ENCODE measurements at regions of chr17 and their contacts with region 1.

Region 1: GRCh38 chr17:19369846-19370492 is 7.4 kb upstream of the B9D1 start:
- DNase-seq: peak in 2 of 6 donors; percentile 21 to 25
- ATAC-seq: no peak
- H3K4me3 ChIP-seq: no peak overlapping the region
- H3K27ac ChIP-seq: no peak overlapping the region
- H3K4me1 ChIP-seq: no peaks in the 10 kb centered on the region
- H3K27me3 ChIP-seq: no peaks in the 10 kb centered on the region
- CTCF ChIP-seq: no peak

Region 2: DNA sequence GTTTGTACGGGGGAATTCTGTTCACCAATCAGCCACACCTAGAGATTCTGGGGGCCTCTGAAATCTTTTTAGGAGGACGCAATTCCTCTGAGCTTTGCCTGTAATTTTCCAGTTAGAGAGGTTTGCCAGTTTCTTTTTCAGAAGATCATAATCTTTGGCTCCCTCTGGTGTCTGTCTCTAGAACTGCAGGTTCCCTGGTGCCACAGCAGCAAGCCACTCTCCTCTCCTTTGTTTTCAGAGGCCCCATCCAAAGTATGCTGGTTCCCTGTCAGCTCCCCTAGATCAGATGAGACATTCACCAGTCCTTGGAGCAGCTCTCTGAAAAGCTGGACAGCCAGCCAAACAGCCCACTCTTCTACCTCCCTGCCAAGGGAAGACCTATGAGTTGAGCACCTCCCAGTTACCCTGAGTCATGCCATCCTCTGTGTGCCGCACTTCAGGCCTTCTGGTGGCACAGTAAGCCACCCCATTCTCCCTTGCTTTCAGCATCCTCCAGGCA is 77.2 kb after region 1 on chr17:
- intact Hi-C with region 1: loop called in 2 of 3 experiments (anchors 5 to 10 kb)
- DNase-seq: peak in 4 of 6 donors; percentile 34 to 79 (median 54)
- ATAC-seq: peak; percentile 61 to 93 (median 88)
- H3K4me3 ChIP-seq: no peak overlapping the region
- H3K27ac ChIP-seq: no peak overlapping the region
- H3K4me1 ChIP-seq: peaks cover 0 to 9% (median 5%) of the 10 kb centered on the region in 3 donors
- H3K27me3 ChIP-seq: no peaks in the 10 kb centered on the region
- CTCF ChIP-seq: peak; percentile 89 to 93 (median 91)